ENCODE measurements at regions of chr6 and their contacts with region 1.

Region 1: DNA sequence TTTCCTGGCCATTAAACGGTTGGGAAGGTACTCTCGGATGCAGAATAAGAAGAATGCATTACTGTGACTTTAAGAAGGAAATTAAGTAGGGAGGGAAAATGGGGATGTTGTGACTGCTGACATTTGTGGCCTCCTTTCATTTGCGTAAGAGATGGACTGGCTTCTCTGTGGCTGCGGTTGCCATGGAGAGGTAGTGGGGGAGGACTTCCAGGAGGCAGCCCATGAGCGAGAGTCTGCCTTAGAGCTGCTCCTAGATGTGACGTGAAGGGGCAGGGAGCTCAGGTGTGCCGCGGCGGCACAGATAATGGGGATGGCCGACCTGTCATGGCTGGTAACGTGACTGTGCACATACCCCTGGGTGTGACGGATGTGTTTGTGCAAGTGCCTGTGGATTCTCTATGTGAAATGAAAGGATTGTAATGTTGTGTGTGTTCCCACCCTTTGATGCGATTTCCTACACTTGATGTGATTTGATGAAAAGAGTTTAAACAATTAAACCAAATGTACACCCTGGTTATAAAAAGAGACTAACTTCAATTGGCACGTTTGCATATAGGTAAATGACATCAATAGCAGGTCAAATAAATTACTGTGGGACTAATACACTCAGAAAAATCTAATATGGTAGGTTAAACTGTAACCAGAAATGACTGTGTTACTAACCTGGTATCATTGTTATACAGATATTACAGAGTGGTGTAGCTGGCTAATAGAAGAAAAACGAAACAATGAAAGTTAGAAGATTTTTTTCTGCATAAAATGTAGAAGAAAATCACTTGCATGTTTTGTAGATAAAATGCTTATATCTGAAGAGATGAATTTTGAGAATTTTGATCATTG is 48.9 kb downstream of the HIVEP1 start:
- DNase-seq: peak; percentile 87
- H3K4me3 Mint-ChIP-seq: peak overlapping the region; percentile 76
- H3K27ac Mint-ChIP-seq: peak overlapping the region; percentile 84
- H3K4me1 Mint-ChIP-seq: peaks cover 65% of the 10 kb centered on the region
- H3K27me3 Mint-ChIP-seq: no peaks in the 10 kb centered on the region

Region 2: DNA sequence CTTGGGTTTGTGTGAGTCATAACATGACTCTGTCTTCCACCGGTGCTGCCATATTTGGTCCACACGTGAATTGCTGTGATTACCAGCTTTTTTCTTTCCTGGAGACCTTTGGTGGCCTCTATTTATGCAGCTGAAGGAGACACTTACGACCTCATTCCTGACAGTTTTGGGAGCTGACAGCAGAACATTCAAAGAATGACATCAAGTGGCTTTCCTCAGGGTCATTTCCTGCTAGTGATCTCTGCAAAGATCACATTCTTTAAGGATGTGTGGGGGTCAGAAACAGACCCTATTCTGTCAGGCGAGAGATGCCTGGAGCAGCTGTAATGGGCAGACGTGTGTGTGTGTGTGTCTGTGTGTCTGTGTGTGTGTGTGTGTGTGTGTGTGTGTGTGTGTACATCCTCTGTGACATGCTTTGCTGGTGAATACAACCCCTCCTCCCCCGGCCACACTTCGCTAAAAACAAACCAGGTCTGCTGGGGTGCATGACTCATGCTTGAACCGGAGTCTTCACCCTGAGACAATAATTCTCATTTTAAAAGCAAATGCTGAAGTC is 407.9 kb before region 1 on chr6:
- CTCF ChIA-PET with region 1: no interaction called
- POLR2A ChIA-PET with region 1: no interaction called
- intact Hi-C with region 1: no loop called
- DNase-seq: peak; percentile 71
- H3K4me3 Mint-ChIP-seq: no peak overlapping the region
- H3K27ac Mint-ChIP-seq: no peak overlapping the region
- H3K4me1 Mint-ChIP-seq: peaks cover 13% of the 10 kb centered on the region
- H3K27me3 Mint-ChIP-seq: peaks cover 9% of the 10 kb centered on the region

Region 3: GRCh38 chr6:12119085-12119588 is 58.1 kb after region 1 on chr6:
- CTCF ChIA-PET with region 1: no interaction called
- POLR2A ChIA-PET with region 1: no interaction called
- intact Hi-C with region 1: loop called (anchors 2 kb)
- DNase-seq: peak; percentile 66
- H3K4me3 Mint-ChIP-seq: no peak overlapping the region
- H3K27ac Mint-ChIP-seq: peak overlapping the region; percentile 85
- H3K4me1 Mint-ChIP-seq: peaks cover 49% of the 10 kb centered on the region
- H3K27me3 Mint-ChIP-seq: no peaks in the 10 kb centered on the region